A673 (cell line): ENCODE measurements at regions of chr15 and their contacts with region 1.

Region 1: DNA sequence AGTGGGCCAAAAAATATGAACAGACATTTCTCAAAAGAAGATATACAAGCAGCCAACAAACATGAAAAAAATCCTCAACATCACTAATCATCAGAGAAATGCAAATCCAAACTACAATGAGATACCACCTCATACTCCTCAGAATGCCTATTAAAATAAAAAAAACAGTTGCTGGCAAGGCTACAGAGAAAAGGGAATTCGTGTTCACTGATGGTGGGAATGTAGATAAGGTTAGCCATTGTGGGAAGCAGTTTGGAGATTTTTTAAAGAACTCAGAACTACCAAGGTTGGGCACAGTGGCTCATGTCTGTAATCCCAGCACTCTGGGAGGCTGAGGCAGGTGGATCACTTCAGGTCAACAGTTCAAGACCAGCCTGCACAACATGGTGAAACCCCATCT is 27.8 kb upstream of the C15orf40 start:
- DNase-seq: no peak
- H3K4me3 ChIP-seq: no peak overlapping the region
- H3K27ac ChIP-seq: no peak overlapping the region
- H3K4me1 ChIP-seq: no peaks in the 10 kb centered on the region
- H3K27me3 ChIP-seq: no peaks in the 10 kb centered on the region
- CTCF ChIP-seq: no peak

Region 2: DNA sequence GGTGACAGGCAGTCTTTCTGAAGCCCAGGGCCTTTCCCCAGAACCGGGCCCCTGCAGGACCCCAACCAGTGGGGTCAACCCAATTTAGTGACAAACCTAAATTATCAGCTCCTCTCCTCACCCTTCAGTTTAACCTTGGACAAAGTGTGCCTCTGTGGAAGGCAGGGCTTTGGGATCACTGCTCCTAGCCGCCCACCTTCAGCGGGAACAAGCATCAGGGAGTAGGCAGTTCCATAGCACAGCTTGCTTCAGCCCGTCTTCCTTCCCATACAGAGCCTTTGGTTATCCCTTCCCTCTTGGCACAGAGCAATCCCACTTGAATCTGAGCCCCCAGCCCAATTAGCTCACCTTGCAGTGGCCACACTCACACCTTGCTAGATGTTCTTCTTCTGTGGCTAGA is 324.2 kb before region 1 on chr15:
- CTCF ChIA-PET with region 1: no interaction called
- POLR2A ChIA-PET with region 1: no interaction called
- intact Hi-C with region 1: no loop called
- DNase-seq: no peak
- H3K4me3 ChIP-seq: no peak overlapping the region
- H3K27ac ChIP-seq: no peak overlapping the region
- H3K4me1 ChIP-seq: no peaks in the 10 kb centered on the region
- H3K27me3 ChIP-seq: peaks cover 11% of the 10 kb centered on the region
- CTCF ChIP-seq: no peak

Region 3: DNA sequence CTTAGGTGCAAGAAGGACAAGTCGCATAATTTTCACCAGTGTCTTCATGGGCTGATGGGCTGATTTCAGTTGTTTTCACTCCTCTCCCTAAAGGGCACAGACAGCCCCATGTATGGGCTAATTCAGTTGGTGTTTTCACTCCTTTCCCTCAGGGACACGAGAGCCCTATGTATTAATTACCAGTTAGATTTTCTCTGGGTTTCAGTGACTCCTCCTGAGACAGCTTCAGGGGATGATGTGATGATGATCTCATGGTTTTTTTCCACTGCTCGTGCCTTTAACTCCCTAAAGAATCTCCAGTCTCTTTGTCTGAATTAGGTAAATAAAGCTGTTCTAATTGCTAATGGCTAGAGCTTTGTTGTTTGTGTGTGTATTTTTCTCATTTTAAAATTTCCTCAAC is 43.3 kb before region 1 on chr15:
- CTCF ChIA-PET with region 1: no interaction called
- POLR2A ChIA-PET with region 1: no interaction called
- intact Hi-C with region 1: no loop called
- DNase-seq: peak; percentile 10
- H3K4me3 ChIP-seq: no peak overlapping the region
- H3K27ac ChIP-seq: no peak overlapping the region
- H3K4me1 ChIP-seq: peaks cover 3% of the 10 kb centered on the region
- H3K27me3 ChIP-seq: no peaks in the 10 kb centered on the region
- CTCF ChIP-seq: no peak

Region 4: DNA sequence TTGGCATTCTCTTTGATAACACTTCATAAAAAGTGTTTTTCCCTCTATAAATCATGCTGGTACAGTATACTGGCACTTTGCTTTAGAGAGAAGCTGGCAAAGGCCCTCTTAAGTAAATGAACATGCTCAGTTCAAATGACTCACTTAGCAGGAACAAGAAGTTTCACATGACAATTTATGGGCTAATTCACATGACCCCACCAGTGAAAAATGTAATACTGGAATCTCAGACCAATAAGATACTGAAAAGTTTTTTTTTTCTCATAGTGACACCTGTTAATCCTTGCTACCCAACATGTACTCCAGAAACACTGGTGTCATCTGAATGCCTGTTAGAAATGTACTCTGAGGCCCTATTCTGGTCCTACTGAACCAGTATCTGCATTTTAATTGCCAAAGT is 13.9 kb after region 1 on chr15:
- CTCF ChIA-PET with region 1: no interaction called
- POLR2A ChIA-PET with region 1: interaction called, 14 read pairs
- intact Hi-C with region 1: no loop called
- DNase-seq: peak; percentile 36
- H3K4me3 ChIP-seq: no peak overlapping the region
- H3K27ac ChIP-seq: no peak overlapping the region
- H3K4me1 ChIP-seq: peaks cover 20% of the 10 kb centered on the region
- H3K27me3 ChIP-seq: no peaks in the 10 kb centered on the region
- CTCF ChIP-seq: no peak

Region 5: GRCh38 chr15:83356501-83357399 is 317.5 kb after region 1 on chr15:
- CTCF ChIA-PET with region 1: no interaction called
- POLR2A ChIA-PET with region 1: no interaction called
- intact Hi-C with region 1: no loop called
- DNase-seq: no peak
- H3K4me3 ChIP-seq: no peak overlapping the region
- H3K27ac ChIP-seq: no peak overlapping the region
- H3K4me1 ChIP-seq: no peaks in the 10 kb centered on the region
- H3K27me3 ChIP-seq: no peaks in the 10 kb centered on the region
- CTCF ChIP-seq: no peak